ENCODE measurements at regions of chr9 and their contacts with region 1.

Region 1: DNA sequence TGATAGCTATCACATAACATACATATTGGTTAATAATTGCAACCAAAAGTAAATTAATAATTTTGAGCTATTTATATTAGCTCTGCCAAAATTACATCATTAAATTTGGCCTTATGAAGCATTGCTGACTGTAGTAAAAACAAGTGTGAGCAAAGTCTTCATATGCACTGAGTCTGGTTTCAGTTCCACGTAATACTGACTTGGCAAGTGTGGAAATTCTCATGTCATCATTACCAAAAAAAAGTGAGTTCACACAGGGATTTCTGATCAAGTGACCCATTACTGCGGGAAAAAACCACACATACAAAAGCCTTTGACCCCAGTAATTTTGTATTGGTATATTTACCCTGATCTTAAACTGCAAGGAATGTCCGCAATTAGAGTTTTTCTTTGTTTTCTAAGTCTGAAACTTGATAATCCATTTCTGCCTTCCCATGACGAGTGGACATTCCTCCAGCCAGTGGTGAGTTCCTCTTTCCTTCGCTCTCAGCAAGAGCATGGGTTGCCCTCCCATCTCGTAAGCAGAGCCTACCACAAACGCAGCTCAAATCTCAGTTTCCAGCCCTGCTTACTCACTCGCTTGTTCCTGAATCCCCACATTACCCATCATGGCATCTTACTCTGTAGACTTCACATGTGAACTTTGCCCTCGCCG is 220.2 kb upstream of the DMRT1 start:
- DNase-seq: peak in 4 of 7 donors; percentile 13 to 52 (median 24)
- H3K4me3 ChIP-seq: no peak overlapping the region
- H3K27ac ChIP-seq: no peak overlapping the region
- H3K4me1 ChIP-seq: no peaks in the 10 kb centered on the region
- H3K27me3 ChIP-seq: no peaks in the 10 kb centered on the region
- CTCF ChIP-seq: no peak
- POLR2A ChIP-seq: no peak

Region 2: DNA sequence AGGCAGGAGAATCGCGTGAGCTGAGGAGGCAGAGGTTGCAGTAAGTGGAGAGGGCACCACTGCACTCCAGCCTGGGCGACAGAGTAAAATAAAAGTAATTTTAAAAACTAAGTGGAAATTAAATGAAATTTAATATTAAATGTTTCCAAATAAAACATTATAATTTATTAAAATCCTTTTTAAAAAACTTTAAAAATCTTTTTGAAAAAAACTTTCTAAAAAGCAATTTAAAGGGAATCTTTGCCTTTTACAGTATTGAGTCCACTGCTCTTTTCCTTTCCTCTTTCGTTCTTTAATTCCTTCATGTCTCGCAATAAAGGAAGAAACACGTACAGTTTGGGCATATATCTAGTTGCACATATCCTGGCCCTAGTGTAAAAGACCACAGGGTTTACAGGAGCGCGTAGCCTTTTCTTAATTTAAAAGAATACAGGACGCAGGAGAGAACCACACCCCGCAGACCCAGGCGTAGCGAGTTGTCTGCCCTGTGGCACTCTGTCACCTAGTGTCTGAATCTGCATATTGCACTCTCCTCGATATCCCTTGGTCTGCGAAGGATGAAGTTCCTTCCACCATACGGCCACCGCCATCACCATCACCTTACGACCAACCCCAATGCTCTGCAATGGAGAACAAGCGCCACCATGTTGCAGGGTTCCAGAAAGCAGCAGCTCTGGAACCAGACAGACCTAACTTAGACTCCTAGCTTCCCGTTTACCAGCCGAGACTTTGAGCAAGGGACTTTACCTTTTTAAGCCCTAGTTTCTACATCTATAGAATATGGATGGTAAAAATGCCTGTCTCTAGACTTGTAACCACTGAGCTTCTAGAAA is 142.6 kb after region 1 on chr9:
- intact Hi-C with region 1: loop called in 1 of 2 experiments (anchors 5 kb)
- DNase-seq: peak; percentile 27 to 70 (median 63)
- H3K4me3 ChIP-seq: no peak overlapping the region
- H3K27ac ChIP-seq: no peak overlapping the region
- H3K4me1 ChIP-seq: no peaks in the 10 kb centered on the region
- H3K27me3 ChIP-seq: no peaks in the 10 kb centered on the region
- CTCF ChIP-seq: peak; percentile 76 to 85 (median 81)
- POLR2A ChIP-seq: no peak

Region 3: DNA sequence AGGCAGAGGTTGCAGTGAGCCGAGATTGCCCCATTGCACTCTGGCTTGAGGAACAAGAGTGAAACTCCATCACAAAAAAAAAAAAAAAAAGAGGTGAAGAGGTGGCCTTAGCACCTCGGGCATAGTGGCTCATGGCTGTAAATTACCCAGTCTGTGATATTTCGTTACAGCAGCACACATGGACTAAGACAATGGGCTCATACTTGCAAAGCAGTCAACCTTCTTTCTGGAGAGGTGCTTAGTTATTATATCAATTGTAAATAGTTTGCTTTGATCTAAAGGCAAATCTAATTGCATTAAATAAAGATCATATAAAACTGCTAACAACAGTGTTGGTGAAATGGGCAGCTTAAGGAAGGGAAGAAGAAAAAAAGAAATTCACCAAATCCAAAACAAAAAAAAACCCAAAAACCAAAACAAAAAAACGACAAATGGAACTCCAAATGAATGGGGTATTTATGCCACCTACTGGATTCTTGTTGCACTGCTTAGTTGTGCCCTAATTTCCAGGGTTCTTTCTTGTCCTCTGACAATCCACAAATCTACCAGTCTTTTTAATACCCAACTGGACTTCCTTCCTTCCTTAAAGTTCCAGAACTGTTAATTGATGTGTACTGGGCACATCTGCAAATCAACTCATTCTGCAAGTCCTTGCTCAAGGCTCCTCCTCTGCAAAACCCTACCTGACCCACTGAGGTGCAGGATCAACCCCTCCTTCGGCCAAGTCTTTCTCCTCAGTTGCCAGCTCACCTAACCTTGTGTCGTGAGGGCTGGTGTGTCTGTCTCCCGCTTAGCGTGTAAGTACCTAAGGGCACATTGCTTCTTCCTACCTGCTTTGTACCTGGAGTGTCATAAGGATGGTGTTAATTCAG is 185.2 kb after region 1 on chr9:
- intact Hi-C with region 1: loop called in 1 of 2 experiments (anchors 5 kb)
- DNase-seq: peak in 2 of 7 donors; percentile 23 to 25
- H3K4me3 ChIP-seq: no peak overlapping the region
- H3K27ac ChIP-seq: no peak overlapping the region
- H3K4me1 ChIP-seq: no peaks in the 10 kb centered on the region
- H3K27me3 ChIP-seq: no peaks in the 10 kb centered on the region
- CTCF ChIP-seq: peak; percentile 44 to 95 (median 68)
- POLR2A ChIP-seq: no peak